AG04450 (cell line): ENCODE measurements at regions of chr7 and their contacts with region 1.

Region 1: DNA sequence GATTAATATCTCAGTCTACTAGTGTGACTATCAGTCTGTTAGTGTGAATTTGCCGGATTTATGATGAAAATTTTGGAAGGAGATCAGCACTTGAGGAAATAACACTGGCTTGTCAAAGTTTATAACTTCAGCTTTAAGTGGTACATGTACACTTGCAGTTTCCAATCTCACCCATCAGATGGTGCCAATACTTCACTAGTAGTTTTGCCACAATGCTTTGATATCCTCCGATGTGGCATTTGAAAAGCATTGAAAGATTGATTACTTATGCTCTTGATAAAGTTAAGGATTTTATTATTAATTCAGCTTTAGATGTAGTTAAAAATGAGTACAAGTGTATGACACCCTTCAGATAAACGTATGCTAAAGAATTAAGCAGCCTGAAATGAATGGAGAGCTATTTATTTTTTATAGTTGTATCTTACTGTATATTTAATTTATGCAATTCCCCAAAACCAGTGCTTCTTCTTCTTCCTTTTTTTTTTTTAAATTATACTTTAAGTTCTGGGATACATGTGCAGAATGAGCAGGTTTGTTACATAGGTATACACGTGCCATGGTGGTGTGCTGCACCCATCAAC is 98.2 kb downstream of the ANLN start:
- DNase-seq: peak; percentile 8
- H3K4me3 ChIP-seq: no peak overlapping the region
- H3K27ac ChIP-seq: no peak overlapping the region
- H3K27me3 ChIP-seq: peaks cover 9% of the 10 kb centered on the region
- CTCF ChIP-seq: peak; percentile 83

Region 2: DNA sequence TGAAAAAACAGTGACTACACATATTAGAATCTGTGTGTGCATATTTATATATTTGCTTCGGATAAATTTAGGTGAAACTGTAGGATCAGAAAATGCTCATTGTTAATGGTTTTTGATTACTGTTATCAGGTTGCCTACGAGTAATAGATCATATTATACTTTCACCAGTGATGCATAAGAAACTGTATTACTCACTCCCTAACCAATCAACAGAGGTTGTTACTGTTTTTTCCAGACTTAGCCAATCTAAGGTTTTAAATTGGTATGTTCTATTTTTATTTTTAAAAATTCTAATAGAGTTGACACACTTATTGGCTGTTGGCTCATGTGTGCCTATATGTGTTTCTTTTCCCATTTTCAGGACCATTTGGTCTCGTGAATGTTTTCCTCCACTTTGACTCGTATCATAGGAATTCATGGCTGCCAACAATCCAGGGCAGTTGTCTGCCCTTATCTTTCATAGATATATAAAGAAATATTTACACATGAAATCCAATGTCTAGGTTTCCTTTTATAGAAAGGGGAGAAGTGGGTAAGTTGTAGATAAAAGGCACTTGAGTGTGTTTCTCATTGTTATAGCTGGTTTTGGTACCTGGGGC is 39.0 kb before region 1 on chr7:
- CTCF ChIA-PET with region 1: interaction called, 11 read pairs
- POLR2A ChIA-PET with region 1: no interaction called
- DNase-seq: no peak
- H3K4me3 ChIP-seq: no peak overlapping the region
- H3K27ac ChIP-seq: no peak overlapping the region
- H3K27me3 ChIP-seq: no peaks in the 10 kb centered on the region
- CTCF ChIP-seq: no peak

Region 3: DNA sequence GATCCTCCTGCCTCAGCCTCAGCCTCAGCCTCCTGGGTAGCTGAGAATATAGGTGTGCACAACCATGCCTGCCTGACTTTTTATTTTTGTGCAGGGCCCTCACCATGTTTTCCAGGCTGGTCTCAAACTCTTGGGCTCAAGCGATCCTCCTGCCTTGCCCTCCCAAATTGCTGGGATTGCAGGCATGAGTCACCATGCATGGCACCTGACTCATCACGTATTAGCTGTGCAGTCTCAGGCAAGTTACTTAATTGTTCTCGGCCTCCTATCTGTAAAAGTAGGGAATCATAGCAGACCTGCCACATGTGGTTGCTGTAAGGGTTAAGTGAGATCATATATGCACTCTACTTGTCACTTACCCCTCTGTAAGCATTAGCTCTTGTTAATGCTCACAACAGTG is 19.0 kb after region 1 on chr7:
- CTCF ChIA-PET with region 1: interaction called, 13 read pairs
- POLR2A ChIA-PET with region 1: no interaction called
- DNase-seq: no peak
- H3K4me3 ChIP-seq: no peak overlapping the region
- H3K27ac ChIP-seq: no peak overlapping the region
- H3K27me3 ChIP-seq: peaks cover 4% of the 10 kb centered on the region
- CTCF ChIP-seq: no peak

Region 4: DNA sequence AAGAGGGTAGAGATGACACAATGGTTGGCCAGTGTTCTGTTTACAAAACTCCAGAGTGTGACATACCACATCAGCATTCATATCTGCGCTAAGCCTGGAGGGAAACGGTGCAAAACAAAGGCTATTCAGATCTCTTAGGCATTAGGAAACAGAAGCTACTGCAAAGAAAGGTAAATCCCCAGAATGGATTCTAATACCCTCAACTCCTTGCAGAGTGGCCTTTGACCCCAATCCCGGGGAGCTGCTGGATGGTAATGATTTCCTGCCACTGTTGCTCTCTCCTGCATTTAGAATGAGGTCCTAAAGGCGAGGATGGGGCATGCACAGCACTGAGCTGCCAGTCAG is 171.3 kb after region 1 on chr7:
- CTCF ChIA-PET with region 1: interaction called, 12 read pairs
- POLR2A ChIA-PET with region 1: no interaction called
- DNase-seq: peak; percentile 69
- H3K4me3 ChIP-seq: no peak overlapping the region
- H3K27ac ChIP-seq: peak overlapping the region; percentile 93
- H3K27me3 ChIP-seq: no peaks in the 10 kb centered on the region
- CTCF ChIP-seq: no peak

Region 5: GRCh38 chr7:36683695-36684357 is 196.0 kb after region 1 on chr7:
- CTCF ChIA-PET with region 1: interaction called, 13 read pairs
- POLR2A ChIA-PET with region 1: no interaction called
- DNase-seq: no peak
- H3K4me3 ChIP-seq: no peak overlapping the region
- H3K27ac ChIP-seq: no peak overlapping the region
- H3K27me3 ChIP-seq: no peaks in the 10 kb centered on the region
- CTCF ChIP-seq: no peak

Region 6: DNA sequence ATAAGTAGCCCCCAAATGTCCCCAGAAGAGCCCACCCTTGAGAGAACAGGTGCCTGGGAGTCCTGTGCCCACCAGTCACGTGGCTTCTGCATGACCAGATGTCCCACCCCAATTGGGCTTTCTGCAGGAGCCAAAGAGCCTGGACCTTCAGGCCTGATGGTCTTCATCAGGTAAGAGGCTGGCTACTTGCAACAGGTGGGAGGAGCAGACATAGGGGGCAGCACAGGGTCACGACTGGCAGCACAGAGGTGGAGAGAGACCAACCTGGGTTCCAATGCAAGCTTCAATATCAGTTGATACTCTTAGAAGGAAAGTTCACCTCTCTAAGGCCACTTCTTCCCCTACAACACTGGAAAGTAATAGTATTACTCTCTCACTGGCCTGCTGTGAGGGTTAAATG is 672.8 kb after region 1 on chr7:
- CTCF ChIA-PET with region 1: no interaction called
- POLR2A ChIA-PET with region 1: no interaction called
- DNase-seq: no peak
- H3K4me3 ChIP-seq: no peak overlapping the region
- H3K27ac ChIP-seq: no peak overlapping the region
- H3K27me3 ChIP-seq: no peaks in the 10 kb centered on the region
- CTCF ChIP-seq: no peak